CD8-positive, alpha-beta memory T cell (primary cell): ENCODE measurements at regions of chr14 and their contacts with region 1.

Region 1: GRCh38 chr14:105999361-106000028 is 473.1 kb downstream of the TMEM121 start:
- DNase-seq: peak; percentile 63 to 85 (median 83)
- H3K4me3 ChIP-seq: no peak overlapping the region
- H3K4me3 Mint-ChIP-seq: no peak overlapping the region
- H3K27ac ChIP-seq: no peak overlapping the region
- H3K27ac Mint-ChIP-seq: peak overlapping the region in 3 of 8 donors; percentile 8 to 91 (median 66)
- H3K4me1 ChIP-seq: peaks cover 28% of the 10 kb centered on the region
- H3K4me1 Mint-ChIP-seq: peaks cover 25 to 44% (median 42%) of the 10 kb centered on the region in 3 donors
- H3K27me3 ChIP-seq: no peaks in the 10 kb centered on the region
- H3K27me3 Mint-ChIP-seq: peaks cover 0 to 4% of the 10 kb centered on the region in 2 donors

Region 2: DNA sequence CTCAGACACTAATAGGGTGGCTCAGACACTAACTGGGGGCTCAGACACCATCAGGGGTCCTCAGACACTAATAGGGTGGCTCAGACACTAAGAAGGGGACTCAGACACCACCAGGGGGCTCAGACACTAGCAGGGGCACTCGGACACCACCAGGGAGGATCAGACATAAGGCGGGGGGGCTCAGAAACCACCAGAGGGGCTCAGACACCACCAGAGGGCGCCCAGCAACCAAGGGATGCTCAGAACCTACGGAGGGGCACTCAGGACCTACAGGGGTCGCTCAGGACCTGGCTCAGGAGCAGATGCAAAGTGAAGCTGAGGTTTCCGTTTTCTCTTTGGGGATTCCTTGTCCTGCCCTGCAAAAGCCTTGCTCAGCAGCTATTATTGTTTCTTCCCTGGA is 24.6 kb before region 1 on chr14:
- CTCF ChIA-PET with region 1: interaction called, 31 read pairs
- POLR2A ChIA-PET with region 1: no interaction called
- DNase-seq: peak; percentile 55 to 83 (median 67)
- H3K4me3 ChIP-seq: no peak overlapping the region
- H3K4me3 Mint-ChIP-seq: no peak overlapping the region
- H3K27ac ChIP-seq: no peak overlapping the region
- H3K27ac Mint-ChIP-seq: peak overlapping the region in 1 of 8 donors; percentile 43
- H3K4me1 ChIP-seq: peaks cover 4% of the 10 kb centered on the region
- H3K4me1 Mint-ChIP-seq: peaks cover 0 to 10% (median 5%) of the 10 kb centered on the region in 3 donors
- H3K27me3 ChIP-seq: peaks cover 10% of the 10 kb centered on the region
- H3K27me3 Mint-ChIP-seq: peaks cover 5 to 57% of the 10 kb centered on the region in 2 donors

Region 3: GRCh38 chr14:105986894-105987284 is 12.6 kb before region 1 on chr14:
- CTCF ChIA-PET with region 1: interaction called, 25 read pairs
- POLR2A ChIA-PET with region 1: no interaction called
- DNase-seq: no peak
- H3K4me3 ChIP-seq: peak overlapping the region; percentile 25
- H3K4me3 Mint-ChIP-seq: peak overlapping the region in 5 of 7 donors; percentile 58 to 76 (median 74)
- H3K27ac ChIP-seq: peak overlapping the region; percentile 38
- H3K27ac Mint-ChIP-seq: peak overlapping the region; percentile 48 to 97 (median 90)
- H3K4me1 ChIP-seq: peaks cover 55% of the 10 kb centered on the region
- H3K4me1 Mint-ChIP-seq: peaks cover 47 to 64% (median 64%) of the 10 kb centered on the region in 3 donors
- H3K27me3 ChIP-seq: no peaks in the 10 kb centered on the region
- H3K27me3 Mint-ChIP-seq: peaks cover 3 to 11% of the 10 kb centered on the region in 2 donors

Region 4: DNA sequence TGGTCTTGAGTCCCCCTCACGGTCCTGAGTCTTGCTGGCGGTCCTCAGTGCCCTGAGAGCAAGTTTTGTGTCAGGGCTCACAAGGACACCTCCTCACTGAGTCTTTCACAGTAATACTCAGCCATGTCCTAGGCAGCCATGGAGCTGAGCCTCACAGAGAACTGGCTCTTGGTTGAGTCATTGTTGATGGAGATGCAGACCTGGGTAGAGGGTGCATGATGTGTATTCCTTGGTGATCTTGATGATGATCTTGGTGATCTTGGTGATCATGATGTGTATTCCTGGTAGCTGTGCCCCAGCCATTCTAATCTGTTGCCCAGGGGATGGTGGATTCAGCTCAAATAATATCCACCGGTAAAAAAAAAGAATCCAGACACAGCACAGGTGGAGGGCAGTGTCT is 22.3 kb after region 1 on chr14:
- CTCF ChIA-PET with region 1: no interaction called
- POLR2A ChIA-PET with region 1: no interaction called
- DNase-seq: no peak
- H3K4me3 ChIP-seq: no peak overlapping the region
- H3K4me3 Mint-ChIP-seq: no peak overlapping the region
- H3K27ac ChIP-seq: no peak overlapping the region
- H3K27ac Mint-ChIP-seq: no peak overlapping the region
- H3K4me1 ChIP-seq: peaks cover 18% of the 10 kb centered on the region
- H3K4me1 Mint-ChIP-seq: peaks cover 0 to 21% (median 13%) of the 10 kb centered on the region in 3 donors
- H3K27me3 ChIP-seq: no peaks in the 10 kb centered on the region
- H3K27me3 Mint-ChIP-seq: peaks cover 9 to 43% of the 10 kb centered on the region in 2 donors